Transverse colon (tissue), 4 donors: ENCODE measurements at regions of chr14 and their contacts with region 1.

Region 1: GRCh38 chr14:77714926-77715325 is 7.0 kb downstream of the SLIRP start:
- DNase-seq: no peak
- H3K4me3 ChIP-seq: no peak overlapping the region
- H3K27ac ChIP-seq: no peak overlapping the region
- H3K4me1 ChIP-seq: peaks cover 0 to 6% (median under 1%) of the 10 kb centered on the region in 4 donors
- H3K27me3 ChIP-seq: no peaks in the 10 kb centered on the region
- CTCF ChIP-seq: no peak
- EP300 ChIP-seq: no peak
- POLR2A ChIP-seq: no peak

Region 2: DNA sequence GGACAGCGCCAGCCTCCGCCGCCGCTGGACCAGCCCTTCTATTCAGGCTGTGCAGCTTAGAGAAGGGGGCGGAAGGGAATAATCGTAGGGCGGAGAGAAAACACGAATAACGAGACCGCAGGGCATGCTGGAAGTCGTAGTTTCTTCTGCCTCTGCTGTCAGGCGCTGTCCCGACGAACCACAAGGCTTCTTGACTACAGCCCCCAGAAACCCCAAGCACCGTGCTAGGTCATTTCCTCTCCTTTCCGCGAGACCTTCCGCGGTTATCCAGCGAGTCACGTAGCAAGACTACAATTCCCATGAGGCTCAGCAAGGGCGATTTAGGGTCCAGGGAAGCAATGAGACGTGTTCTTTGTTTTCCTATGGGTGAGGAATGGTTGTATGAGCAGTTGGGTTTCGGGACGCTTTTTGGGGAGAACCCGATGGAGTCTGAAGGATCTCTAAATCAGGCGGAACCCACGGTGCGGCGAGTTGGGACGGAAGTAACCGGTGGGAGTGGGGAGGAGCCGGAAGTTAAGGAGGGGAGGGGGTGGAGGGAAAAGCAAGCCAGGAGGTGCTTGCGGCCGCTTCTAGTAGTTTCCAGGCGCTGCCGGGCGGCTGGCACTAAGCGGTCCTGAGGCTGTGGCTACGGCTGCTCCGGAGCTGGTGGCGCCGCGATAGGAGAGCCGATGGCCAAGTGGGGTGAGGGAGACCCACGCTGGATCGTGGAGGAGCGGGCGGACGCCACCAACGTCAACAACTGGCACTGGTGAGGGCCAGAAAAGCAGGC is 257.2 kb before region 1 on chr14 and contains the starts of genes AHSA1 and VIPAS39:
- in situ Hi-C with region 1: loop called in 1 of 4 experiments (anchors 10 kb)
- intact Hi-C with region 1: no loop called
- DNase-seq: peak; percentile 96
- H3K4me3 ChIP-seq: peak within 1 kb of the TSS; percentile 62 to 88 (median 72)
- H3K27ac ChIP-seq: peak within 1 kb of the TSS; percentile 88 to 94 (median 91)
- H3K4me1 ChIP-seq: peaks cover 14 to 30% (median 21%) of the 10 kb centered on the region in 4 donors
- H3K27me3 ChIP-seq: no peaks in the 10 kb centered on the region
- CTCF ChIP-seq: no peak
- EP300 ChIP-seq: no peak
- POLR2A ChIP-seq: peak; percentile 57
- total RNA-seq, gene AHSA1: 66.6 to 101 (median 87.5) TPM
- total RNA-seq, gene VIPAS39: 8.0 to 21.6 (median 18.0) TPM

Region 3: GRCh38 chr14:77603654-77604255 is 111.2 kb before region 1 on chr14:
- in situ Hi-C with region 1: no loop called
- intact Hi-C with region 1: no loop called
- DNase-seq: peak; percentile 51
- H3K4me3 ChIP-seq: no peak overlapping the region
- H3K27ac ChIP-seq: no peak overlapping the region
- H3K4me1 ChIP-seq: peaks cover 10 to 75% (median 45%) of the 10 kb centered on the region in 4 donors
- H3K27me3 ChIP-seq: no peaks in the 10 kb centered on the region
- CTCF ChIP-seq: peak; percentile 8 to 47 (median 26)
- EP300 ChIP-seq: no peak
- POLR2A ChIP-seq: no peak

Region 4: GRCh38 chr14:78829274-78829673 is 1114.3 kb after region 1 on chr14:
- in situ Hi-C with region 1: no loop called
- intact Hi-C with region 1: no loop called
- DNase-seq: no peak
- H3K4me3 ChIP-seq: no peak overlapping the region
- H3K27ac ChIP-seq: no peak overlapping the region
- H3K4me1 ChIP-seq: no peaks in the 10 kb centered on the region
- H3K27me3 ChIP-seq: no peaks in the 10 kb centered on the region
- CTCF ChIP-seq: no peak
- EP300 ChIP-seq: no peak
- POLR2A ChIP-seq: no peak